K562 (cell line): ENCODE measurements at regions of chr17 and their contacts with region 1.

Region 1: DNA sequence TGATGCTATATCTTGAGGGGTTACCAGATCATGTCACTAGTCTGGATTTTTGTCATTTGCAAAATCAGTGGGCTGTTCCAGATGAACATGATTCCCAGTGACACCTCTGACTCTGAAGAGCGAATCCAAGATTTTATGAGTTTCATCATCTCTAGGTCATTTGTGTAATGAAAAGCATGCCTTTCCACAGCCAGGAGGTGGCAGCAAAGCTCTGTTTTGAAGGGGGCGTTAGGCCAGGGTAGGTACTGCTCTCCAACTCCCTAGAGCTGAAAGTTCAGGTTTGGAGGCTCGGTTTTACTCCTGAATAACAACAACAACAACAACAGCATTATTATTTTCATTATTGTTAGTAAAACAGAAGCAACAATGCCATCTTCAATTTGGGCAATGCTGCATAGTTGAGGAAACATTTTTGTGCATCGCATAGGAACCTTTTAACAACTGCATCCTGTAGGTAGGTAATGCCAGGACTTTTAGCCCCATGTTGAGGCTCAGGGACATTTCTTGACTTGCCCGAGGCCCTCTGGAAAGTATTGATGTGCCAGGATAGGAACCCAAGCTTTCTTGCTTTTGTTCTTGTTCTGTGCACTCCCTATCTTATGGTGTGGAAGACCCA is 77.0 kb downstream of the MYH13 start:
- DNase-seq: peak; percentile 47 to 58 (median 54)
- ATAC-seq: peak; percentile 85
- H3K4me3 ChIP-seq: no peak overlapping the region
- H3K27ac ChIP-seq: no peak overlapping the region
- H3K4me1 ChIP-seq: peaks cover 0 to 2% of the 10 kb centered on the region in 2 experiments; a peak in 1 of 5 replicates
- H3K27me3 ChIP-seq: no peaks in the 10 kb centered on the region
- CTCF ChIP-seq: peak; percentile 54 to 68 (median 64); a peak in 5 of 6 replicates
- EP300 ChIP-seq: no peak
- POLR2A ChIP-seq: no peak
- RAD21 ChIP-seq: peak; percentile 35 to 64

Region 2: GRCh38 chr17:10357768-10358167 is 61.9 kb after region 1 on chr17:
- CTCF ChIA-PET with region 1: no interaction called
- POLR2A ChIA-PET with region 1: no interaction called
- in situ Hi-C with region 1: no loop called
- intact Hi-C with region 1: loop called (anchors 10 kb)
- DNase-seq: peak; percentile 18 to 60 (median 58)
- ATAC-seq: peak; percentile 80
- H3K4me3 ChIP-seq: no peak overlapping the region
- H3K27ac ChIP-seq: no peak overlapping the region
- H3K4me1 ChIP-seq: no peaks in the 10 kb centered on the region
- H3K27me3 ChIP-seq: no peaks in the 10 kb centered on the region
- CTCF ChIP-seq: peak; percentile 51 to 64 (median 52)
- EP300 ChIP-seq: no peak
- POLR2A ChIP-seq: no peak
- RAD21 ChIP-seq: peak in 1 of 2 experiments; percentile 23; a peak in 1 of 4 replicates